Mammary epithelial cell (primary cell): ENCODE measurements at regions of chr13 and their contacts with region 1.

Region 1: DNA sequence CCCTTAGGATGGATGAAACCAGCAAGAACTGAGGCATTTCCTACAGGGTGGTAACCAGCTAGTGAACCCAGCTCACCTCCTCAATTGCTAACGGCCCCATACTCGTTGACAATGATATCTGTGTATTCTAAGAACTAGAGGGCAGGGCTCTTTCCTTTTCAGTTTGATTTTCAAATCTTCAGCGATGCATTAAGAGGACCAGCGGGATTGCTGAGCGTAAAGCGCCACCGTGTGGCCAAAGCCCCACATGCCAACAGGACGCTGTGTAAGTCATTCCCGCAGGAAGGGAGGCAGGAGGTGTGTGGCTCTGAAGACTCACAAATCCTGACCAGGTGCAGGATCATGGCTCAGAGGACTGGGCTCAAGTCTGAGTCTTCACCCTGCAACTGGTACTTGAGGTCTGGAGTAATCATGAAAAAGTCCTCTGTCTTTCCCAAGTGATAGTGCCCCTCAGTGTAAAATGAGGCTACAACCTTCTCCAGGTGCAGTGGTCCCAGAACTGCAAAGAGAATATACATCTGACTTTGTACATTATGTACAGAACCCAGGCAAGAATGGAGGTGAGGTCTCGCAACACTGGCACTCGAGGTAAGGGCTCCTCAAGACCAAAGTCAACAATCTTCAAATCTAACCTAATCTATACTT is 40.9 kb downstream of the C13orf42 start:
- DNase-seq: peak; percentile 64
- H3K4me3 ChIP-seq: no peak overlapping the region
- H3K27ac ChIP-seq: no peak overlapping the region
- H3K4me1 ChIP-seq: peaks cover 19% of the 10 kb centered on the region
- H3K27me3 ChIP-seq: peaks cover 2% of the 10 kb centered on the region
- CTCF ChIP-seq: peak; percentile 97 to 98

Region 2: GRCh38 chr13:49996951-49997895 is 1072.9 kb before region 1 on chr13 and contains the start of gene TRIM13:
- CTCF ChIA-PET with region 1: interaction called, 3 read pairs
- dilution Hi-C with region 1: no loop called
- in situ Hi-C with region 1: loop called in 1 of 2 experiments (anchors 25 kb)
- intact Hi-C with region 1: no loop called
- DNase-seq: peak; percentile 79
- H3K4me3 ChIP-seq: peak within 1 kb of the TSS; percentile 69 to 85 (median 79)
- H3K27ac ChIP-seq: peak within 1 kb of the TSS; percentile 79
- H3K4me1 ChIP-seq: peaks cover 13% of the 10 kb centered on the region
- H3K27me3 ChIP-seq: no peaks in the 10 kb centered on the region
- CTCF ChIP-seq: peak; percentile 58 to 86
- total RNA-seq, gene TRIM13: 17.9 to 21.0 TPM

Region 3: DNA sequence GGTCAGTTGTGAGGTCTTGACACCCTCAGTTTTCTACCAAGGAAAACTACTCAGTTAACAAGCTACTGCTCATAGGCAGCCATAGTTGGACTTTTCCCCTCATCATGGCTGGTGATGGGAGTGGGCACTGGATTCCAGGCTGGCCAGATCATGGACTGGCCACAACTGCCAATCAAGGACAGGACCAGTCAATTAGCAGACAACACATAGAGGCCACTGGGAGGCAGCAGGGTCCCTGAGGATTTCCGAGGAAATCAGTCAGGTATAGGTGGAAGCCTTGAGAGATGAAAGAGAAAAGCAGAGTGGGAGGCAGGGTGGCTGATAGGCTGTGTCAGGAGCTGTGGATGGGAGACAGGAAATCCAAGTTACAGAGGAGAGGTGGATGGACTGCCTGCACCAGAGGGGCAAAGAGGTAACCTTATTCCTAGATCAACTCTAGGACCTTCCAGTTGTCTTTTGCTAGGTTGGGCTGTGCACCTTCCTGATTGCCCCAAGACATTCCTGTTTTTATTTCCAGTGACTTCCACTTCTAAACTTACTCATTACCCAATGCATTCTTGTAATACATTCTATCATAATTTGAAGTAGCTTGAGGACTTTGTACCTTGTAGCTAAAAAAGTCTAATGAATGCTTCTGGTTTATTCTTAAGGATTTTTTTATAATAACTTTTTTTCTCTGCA is 693.1 kb before region 1 on chr13:
- CTCF ChIA-PET with region 1: no interaction called
- dilution Hi-C with region 1: no loop called
- in situ Hi-C with region 1: no loop called
- intact Hi-C with region 1: loop called (anchors 1 kb)
- DNase-seq: no peak
- H3K4me3 ChIP-seq: no peak overlapping the region
- H3K27ac ChIP-seq: no peak overlapping the region
- H3K4me1 ChIP-seq: no peaks in the 10 kb centered on the region
- H3K27me3 ChIP-seq: no peaks in the 10 kb centered on the region
- CTCF ChIP-seq: peak; percentile 15 to 49

Region 4: GRCh38 chr13:50969691-50970090 is 100.4 kb before region 1 on chr13:
- CTCF ChIA-PET with region 1: no interaction called
- dilution Hi-C with region 1: no loop called
- in situ Hi-C with region 1: no loop called
- intact Hi-C with region 1: loop called (anchors 1 kb)
- DNase-seq: peak; percentile 16
- H3K4me3 ChIP-seq: no peak overlapping the region
- H3K27ac ChIP-seq: no peak overlapping the region
- H3K4me1 ChIP-seq: no peaks in the 10 kb centered on the region
- H3K27me3 ChIP-seq: no peaks in the 10 kb centered on the region
- CTCF ChIP-seq: peak in 1 of 2 donors; percentile 42